Aorta (tissue), 5 donors: ENCODE measurements at regions of chr10 and their contacts with region 1.

Region 1: DNA sequence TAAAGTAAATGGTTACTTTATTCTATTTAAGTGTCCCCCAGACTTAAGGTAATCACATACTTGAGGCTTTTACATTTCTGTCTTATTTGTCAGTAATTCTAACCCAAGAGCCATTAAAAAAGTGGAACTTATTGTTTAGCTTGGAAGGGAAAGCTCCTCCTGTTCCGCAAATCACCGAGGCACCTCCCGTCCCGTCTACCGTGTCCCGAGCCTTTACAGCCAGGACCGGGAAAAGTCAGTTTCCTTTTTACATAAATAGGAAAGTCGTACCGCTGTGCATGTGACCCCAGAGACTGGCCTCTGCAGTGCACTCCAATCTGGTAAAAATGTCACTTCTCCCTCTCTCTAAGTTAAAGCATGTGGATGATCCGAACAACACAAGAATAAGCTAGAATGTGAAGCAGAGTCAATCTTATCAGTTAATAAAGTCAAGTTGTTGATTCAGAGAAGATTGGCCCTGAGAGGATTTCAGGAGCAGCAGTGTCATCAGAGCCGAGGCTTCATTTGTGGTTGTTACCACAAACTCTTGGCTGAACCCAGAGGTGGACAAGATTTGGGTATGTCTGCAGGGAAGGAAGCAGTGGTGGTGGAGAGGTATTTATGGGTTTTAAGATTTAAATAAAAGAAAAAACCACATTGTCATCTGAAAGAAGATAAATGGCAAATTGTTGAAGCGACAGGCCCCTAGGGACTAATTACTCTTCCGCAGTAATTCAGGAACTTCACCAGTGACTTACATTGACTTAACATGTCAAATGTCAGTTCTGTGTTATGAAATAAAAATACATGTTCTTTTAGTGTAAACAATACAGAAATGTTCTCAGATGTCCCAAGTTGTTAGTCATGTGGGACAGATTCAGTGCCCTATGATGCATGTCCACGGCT is 316.6 kb upstream of the ZNF32 start:
- DNase-seq: peak in 1 of 2 donors; percentile 74
- ATAC-seq: peak; percentile 66
- H3K4me3 ChIP-seq: no peak overlapping the region
- H3K27ac ChIP-seq: peak overlapping the region; percentile 14 to 31
- H3K4me1 ChIP-seq: peaks cover 2 to 6% of the 10 kb centered on the region in 2 donors
- H3K27me3 ChIP-seq: no peaks in the 10 kb centered on the region

Region 2: DNA sequence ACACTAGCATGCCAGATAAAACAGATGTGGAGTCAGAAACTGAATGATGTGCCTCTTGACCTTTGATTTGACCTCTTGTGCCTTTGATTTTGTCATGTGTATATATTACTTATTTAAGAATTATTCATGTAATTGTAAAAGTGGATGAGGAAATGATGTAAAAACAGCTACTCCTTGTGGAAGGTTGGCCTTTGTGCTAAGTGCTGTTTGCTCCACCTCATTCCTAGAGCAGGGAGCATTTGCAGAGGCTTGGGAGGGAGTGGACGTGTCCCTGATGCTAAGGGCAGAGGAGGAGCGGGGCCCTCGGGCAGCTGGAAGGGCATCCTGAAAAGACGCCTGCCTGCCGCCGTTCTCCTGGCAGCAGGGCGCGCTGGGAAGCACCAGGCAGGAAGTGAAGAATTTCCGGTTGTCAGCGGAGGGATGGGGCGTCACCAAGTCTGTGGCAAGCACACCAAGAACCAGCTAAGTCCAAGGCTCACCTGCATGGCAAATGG is 119.0 kb before region 1 on chr10:
- intact Hi-C with region 1: no loop called
- DNase-seq: peak; percentile 72 to 85
- ATAC-seq: peak; percentile 74
- H3K4me3 ChIP-seq: no peak overlapping the region
- H3K27ac ChIP-seq: peak overlapping the region in 1 of 2 donors; percentile 0
- H3K4me1 ChIP-seq: peaks cover 0 to 2% of the 10 kb centered on the region in 2 donors
- H3K27me3 ChIP-seq: no peaks in the 10 kb centered on the region

Region 3: GRCh38 chr10:43863859-43864591 is 101.2 kb before region 1 on chr10:
- intact Hi-C with region 1: loop called in 1 of 2 experiments (anchors 5 kb)
- DNase-seq: peak in 1 of 2 donors; percentile 71
- ATAC-seq: peak; percentile 86
- H3K4me3 ChIP-seq: no peak overlapping the region
- H3K27ac ChIP-seq: peak overlapping the region; percentile 49 to 94
- H3K4me1 ChIP-seq: peaks cover 4 to 16% of the 10 kb centered on the region in 2 donors
- H3K27me3 ChIP-seq: no peaks in the 10 kb centered on the region

Region 4: DNA sequence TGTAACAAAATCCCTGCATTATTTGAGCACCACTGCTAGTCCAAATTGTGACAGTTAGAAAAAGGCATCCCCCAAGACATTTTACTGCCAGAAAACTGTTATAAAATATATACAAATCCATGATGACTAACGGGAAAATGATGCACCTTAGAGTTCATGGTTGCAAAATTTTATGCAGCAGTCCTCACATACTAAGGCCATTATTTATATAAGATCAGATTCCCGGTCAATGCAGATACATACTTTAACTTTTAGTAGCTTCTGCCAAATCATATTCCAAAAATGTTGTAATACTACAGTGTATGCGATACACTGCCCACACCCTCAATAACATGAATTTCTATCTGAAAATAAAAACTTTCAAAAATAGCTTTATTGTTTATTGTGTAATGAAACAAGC is 76.7 kb before region 1 on chr10:
- intact Hi-C with region 1: no loop called
- DNase-seq: no peak
- ATAC-seq: no peak
- H3K4me3 ChIP-seq: no peak overlapping the region
- H3K27ac ChIP-seq: no peak overlapping the region
- H3K4me1 ChIP-seq: no peaks in the 10 kb centered on the region
- H3K27me3 ChIP-seq: no peaks in the 10 kb centered on the region

Region 5: GRCh38 chr10:44071479-44071878 is 106.2 kb after region 1 on chr10:
- intact Hi-C with region 1: loop called in 1 of 2 experiments (anchors 5 kb)
- DNase-seq: no peak
- ATAC-seq: no peak
- H3K4me3 ChIP-seq: no peak overlapping the region
- H3K27ac ChIP-seq: peak overlapping the region in 1 of 2 donors; percentile 76
- H3K4me1 ChIP-seq: no peaks in the 10 kb centered on the region
- H3K27me3 ChIP-seq: no peaks in the 10 kb centered on the region

Region 6: GRCh38 chr10:44300666-44301649 is 335.7 kb after region 1 on chr10:
- intact Hi-C with region 1: loop called in 1 of 2 experiments (anchors 5 kb)
- DNase-seq: no peak
- ATAC-seq: no peak
- H3K4me3 ChIP-seq: no peak overlapping the region
- H3K27ac ChIP-seq: no peak overlapping the region
- H3K4me1 ChIP-seq: peaks cover 0 to 7% of the 10 kb centered on the region in 2 donors
- H3K27me3 ChIP-seq: no peaks in the 10 kb centered on the region

Region 7: GRCh38 chr10:44526765-44527164 is 561.5 kb after region 1 on chr10:
- intact Hi-C with region 1: no loop called
- DNase-seq: no peak
- ATAC-seq: no peak
- H3K4me3 ChIP-seq: no peak overlapping the region
- H3K27ac ChIP-seq: no peak overlapping the region
- H3K4me1 ChIP-seq: no peaks in the 10 kb centered on the region
- H3K27me3 ChIP-seq: no peaks in the 10 kb centered on the region